PC-3 (cell line): ENCODE measurements at regions of chr2 and their contacts with region 1.

Region 1: DNA sequence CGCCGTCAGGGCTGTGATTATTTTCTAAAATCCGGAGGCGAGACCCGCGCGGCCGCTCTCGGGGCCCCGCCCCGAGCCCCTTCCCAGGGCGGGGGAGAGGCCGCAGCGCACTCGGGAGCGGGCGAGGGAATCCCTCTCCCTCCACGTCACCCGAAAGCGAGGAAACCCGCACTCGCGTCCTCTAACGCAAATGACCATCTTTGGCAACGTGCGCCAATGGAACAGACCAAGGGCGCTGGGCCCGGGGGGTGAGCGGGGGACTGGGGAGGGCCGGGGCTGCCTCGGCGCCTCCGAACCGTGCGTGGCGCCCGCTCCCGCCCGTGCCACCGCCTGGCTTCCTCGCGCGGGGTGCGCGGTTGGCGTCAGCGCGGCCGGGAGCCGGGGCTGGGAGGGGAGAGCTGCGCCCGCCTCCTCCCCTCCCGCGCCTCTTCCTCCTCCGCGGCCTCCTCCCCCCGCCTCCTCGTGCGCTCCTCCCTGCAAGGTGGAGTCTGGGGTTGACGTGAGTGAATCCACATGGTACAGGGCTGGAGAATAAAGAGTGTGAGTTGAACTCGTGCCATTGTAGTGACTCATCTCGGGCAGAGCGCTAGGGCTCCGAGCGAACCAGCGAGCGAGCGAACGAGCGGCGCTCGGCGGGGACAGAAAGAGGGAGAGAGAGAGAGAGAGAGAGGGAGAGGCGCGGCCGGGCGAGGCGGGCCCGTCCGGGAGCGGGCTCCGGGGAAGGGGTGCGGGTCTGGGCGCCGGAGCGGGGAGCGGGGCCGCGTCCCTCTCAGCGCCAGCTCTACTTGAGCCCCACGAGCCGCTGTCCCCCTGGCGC is at the start of gene FOSL2:
- DNase-seq: peak; percentile 99
- ATAC-seq: peak; percentile 61
- H3K4me3 ChIP-seq: peak within 1 kb of the TSS; percentile 87
- H3K27ac ChIP-seq: peak within 1 kb of the TSS; percentile 91
- H3K4me1 ChIP-seq: peaks cover 38% of the 10 kb centered on the region
- H3K27me3 ChIP-seq: no peaks in the 10 kb centered on the region
- CTCF ChIP-seq: no peak
- total RNA-seq, gene FOSL2: 34.2 and 46.8 TPM in 2 replicates

Region 2: GRCh38 chr2:27703638-27704341 is 688.7 kb before region 1 on chr2:
- CTCF ChIA-PET with region 1: interaction called, 6 read pairs
- POLR2A ChIA-PET with region 1: interaction called, 4 read pairs
- intact Hi-C with region 1: loop called (anchors 1 kb)
- DNase-seq: peak; percentile 94
- ATAC-seq: peak; percentile 62
- H3K4me3 ChIP-seq: no peak overlapping the region
- H3K27ac ChIP-seq: no peak overlapping the region
- H3K4me1 ChIP-seq: peaks cover 30% of the 10 kb centered on the region
- H3K27me3 ChIP-seq: no peaks in the 10 kb centered on the region
- CTCF ChIP-seq: peak; percentile 96

Region 3: DNA sequence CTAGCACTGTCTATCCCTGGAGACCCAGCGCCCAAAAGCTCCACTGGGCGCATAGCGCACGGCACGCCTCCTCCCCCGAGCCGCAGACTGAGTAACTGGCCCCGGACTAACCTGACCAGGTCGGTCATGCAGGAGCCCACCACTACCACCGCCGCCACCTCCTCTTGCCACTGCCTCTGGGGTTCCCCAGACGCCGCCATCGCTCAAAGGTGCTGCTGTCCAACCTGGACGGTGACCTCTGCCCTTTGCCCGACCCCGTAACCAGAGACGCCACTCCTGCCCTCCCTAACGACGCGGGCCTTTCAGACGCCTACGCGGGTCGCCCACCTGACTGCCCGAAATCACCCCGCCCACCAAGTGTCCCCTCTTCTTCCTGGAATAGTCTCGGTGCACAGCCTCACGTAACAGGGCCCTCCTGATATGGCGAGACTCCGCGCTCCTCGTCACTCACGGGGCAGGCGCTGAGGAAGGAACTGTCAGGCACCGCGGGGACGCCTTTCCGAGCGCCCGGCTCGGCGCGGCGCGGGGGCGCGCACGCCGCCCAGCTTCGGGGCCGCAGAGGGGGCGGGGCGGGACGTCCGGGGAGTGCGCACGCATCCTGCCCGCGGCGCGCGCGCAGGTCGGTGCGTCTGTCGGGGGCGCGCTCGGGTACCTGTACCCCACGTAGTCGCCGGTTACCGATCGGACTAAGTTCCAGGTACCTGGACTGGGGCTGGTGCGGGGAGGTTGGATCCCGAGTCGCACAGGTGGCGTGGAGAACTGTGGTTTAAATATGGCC is 502.2 kb before region 1 on chr2 and contains the starts of genes BABAM2 and RBKS:
- CTCF ChIA-PET with region 1: no interaction called
- POLR2A ChIA-PET with region 1: no interaction called
- intact Hi-C with region 1: loop called (anchors 2 kb)
- DNase-seq: peak; percentile 87
- ATAC-seq: peak; percentile 86
- H3K4me3 ChIP-seq: peak within 1 kb of the TSS; percentile 88
- H3K27ac ChIP-seq: peak within 1 kb of the TSS; percentile 79
- H3K4me1 ChIP-seq: peaks cover 27% of the 10 kb centered on the region
- H3K27me3 ChIP-seq: no peaks in the 10 kb centered on the region
- CTCF ChIP-seq: no peak
- total RNA-seq, gene BABAM2: 16.3 and 17.9 TPM in 2 replicates
- total RNA-seq, gene RBKS: 1.8 and 2.6 TPM in 2 replicates

Region 4: DNA sequence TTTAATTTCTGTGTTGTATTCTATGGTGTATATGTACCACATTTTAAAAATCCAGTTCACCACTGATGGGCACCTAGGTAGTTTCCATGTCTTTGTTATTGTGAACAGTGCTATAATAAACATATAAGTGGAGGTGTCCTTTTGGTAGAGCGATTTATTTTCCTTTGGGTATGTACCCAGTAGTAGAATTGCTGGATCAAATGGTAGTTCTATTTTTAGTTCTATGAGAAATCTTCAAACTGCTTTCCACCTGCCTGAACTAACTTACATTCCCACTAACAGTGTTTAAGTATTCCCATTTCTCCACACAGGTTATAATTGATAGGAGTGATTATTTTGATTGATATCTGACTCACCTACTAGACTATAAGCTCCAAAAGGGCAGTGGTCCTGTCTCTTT is 353.8 kb before region 1 on chr2:
- CTCF ChIA-PET with region 1: interaction called, 10 read pairs
- POLR2A ChIA-PET with region 1: no interaction called
- intact Hi-C with region 1: no loop called
- DNase-seq: no peak
- ATAC-seq: no peak
- H3K4me3 ChIP-seq: no peak overlapping the region
- H3K27ac ChIP-seq: no peak overlapping the region
- H3K4me1 ChIP-seq: no peaks in the 10 kb centered on the region
- H3K27me3 ChIP-seq: no peaks in the 10 kb centered on the region
- CTCF ChIP-seq: no peak

Region 5: GRCh38 chr2:28137221-28137620 is 255.3 kb before region 1 on chr2:
- CTCF ChIA-PET with region 1: no interaction called
- POLR2A ChIA-PET with region 1: interaction called, 6 read pairs
- intact Hi-C with region 1: loop called (anchors 5 kb)
- DNase-seq: peak; percentile 83
- ATAC-seq: peak; percentile 89
- H3K4me3 ChIP-seq: no peak overlapping the region
- H3K27ac ChIP-seq: no peak overlapping the region
- H3K4me1 ChIP-seq: peaks cover 11% of the 10 kb centered on the region
- H3K27me3 ChIP-seq: no peaks in the 10 kb centered on the region
- CTCF ChIP-seq: no peak

Region 6: DNA sequence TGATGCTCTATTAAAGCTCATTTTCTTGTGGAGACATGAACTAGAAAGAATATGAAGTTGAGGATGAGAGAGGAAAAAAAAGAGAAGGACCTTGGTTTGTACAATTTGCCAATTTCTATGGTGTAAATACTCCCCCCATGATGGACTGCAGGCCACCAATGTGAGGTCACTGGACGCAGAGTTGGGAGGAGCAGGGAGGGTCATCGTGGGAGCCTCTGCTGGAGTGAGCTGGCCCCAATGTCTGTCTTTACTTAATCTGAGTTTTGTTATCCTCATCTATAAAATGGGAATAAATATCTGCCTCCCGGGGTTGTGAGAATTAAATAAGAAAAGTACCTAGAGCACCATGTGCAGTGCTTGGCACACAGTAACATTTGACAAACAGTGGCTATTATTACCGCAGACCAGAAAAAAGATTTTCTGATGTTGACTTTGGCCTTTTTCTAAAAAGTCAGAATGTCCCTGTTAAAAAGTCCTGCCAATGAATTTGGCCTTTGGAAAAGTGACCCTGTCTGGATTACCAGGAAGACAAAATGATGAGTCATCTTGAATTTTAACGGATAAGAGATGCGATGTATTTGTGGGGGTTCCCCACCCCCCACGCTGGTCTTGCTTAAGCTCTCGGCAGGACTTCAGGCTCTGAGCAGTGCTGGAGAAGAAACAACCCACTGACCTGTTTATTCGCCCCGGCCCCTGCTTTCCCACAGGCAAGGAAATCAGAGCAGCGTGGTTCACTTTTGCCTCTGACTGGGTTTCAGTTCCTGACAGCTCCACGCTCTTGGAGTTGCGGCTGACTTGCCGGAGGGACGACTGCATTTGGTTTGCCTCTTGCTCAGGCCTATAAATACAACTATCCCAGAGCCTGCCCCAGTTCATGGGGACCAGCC is 50.2 kb before region 1 on chr2:
- CTCF ChIA-PET with region 1: no interaction called
- POLR2A ChIA-PET with region 1: no interaction called
- intact Hi-C with region 1: loop called (anchors 5 kb)
- DNase-seq: peak; percentile 33
- ATAC-seq: peak; percentile 36
- H3K4me3 ChIP-seq: no peak overlapping the region
- H3K27ac ChIP-seq: no peak overlapping the region
- H3K4me1 ChIP-seq: peaks cover 16% of the 10 kb centered on the region
- H3K27me3 ChIP-seq: no peaks in the 10 kb centered on the region
- CTCF ChIP-seq: no peak